H1 (cell line): ENCODE measurements at regions of chr12 and their contacts with region 1.

Region 1: GRCh38 chr12:60977966-60978365 is 1282.2 kb upstream of the USP15 start:
- DNase-seq: peak in 1 of 2 experiments; percentile 1
- H3K4me3 ChIP-seq: no peak overlapping the region
- H3K27ac ChIP-seq: no peak overlapping the region
- H3K4me1 ChIP-seq: peaks cover 0 to 4% (median 1%) of the 10 kb centered on the region in 4 experiments; a peak in 2 of 7 replicates
- H3K27me3 ChIP-seq: no peaks in the 10 kb centered on the region
- CTCF ChIP-seq: peak in 2 of 3 experiments; percentile 41 to 59; a peak in 2 of 4 replicates
- EP300 ChIP-seq: no peak
- POLR2A ChIP-seq: no peak
- RAD21 ChIP-seq: peak; percentile 57 to 67

Region 2: GRCh38 chr12:60752589-60752988 is 225.4 kb before region 1 on chr12:
- CTCF ChIA-PET with region 1: no interaction called
- POLR2A ChIA-PET with region 1: no interaction called
- DNase-seq: no peak
- H3K4me3 ChIP-seq: no peak overlapping the region
- H3K27ac ChIP-seq: no peak overlapping the region
- H3K4me1 ChIP-seq: no peaks in the 10 kb centered on the region
- H3K27me3 ChIP-seq: no peaks in the 10 kb centered on the region
- CTCF ChIP-seq: no peak
- EP300 ChIP-seq: no peak
- POLR2A ChIP-seq: no peak
- RAD21 ChIP-seq: no peak

Region 3: DNA sequence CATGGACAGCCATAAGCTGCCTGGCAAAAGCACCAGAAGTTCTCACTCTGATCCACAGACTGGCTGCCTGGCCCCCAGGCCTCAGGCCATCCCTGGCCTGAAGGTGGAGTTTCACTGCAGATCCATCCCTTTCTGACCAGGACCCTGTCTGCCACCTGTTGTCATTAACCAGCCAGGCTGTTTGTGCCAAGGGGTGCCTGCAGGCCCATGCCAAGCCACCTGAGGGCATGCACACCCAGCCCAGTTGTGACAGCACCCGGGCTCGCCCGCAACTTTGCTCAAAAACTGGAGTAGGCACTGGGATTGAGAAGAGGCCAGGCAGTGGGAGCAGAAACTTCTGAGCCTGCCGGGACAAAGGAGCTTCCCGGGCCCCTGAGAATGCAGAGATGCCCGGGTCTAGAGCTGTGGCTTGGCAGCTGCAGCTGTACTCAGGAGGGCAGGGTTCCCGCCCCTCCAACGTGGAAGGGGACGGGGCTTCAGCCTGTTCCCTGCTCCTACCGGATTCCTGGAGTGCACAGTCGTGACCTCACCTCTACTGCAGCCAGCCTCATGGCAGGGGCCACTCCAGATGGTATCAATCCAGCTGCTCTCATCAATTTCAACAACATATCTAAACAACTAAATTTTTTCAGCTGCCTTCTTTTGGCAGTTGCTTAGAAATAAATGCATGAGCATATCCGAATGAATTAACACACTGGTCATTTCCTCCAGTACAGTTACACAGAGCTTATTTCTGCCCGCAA is 104.8 kb before region 1 on chr12:
- CTCF ChIA-PET with region 1: no interaction called
- POLR2A ChIA-PET with region 1: no interaction called
- DNase-seq: peak in 1 of 2 experiments; percentile 35
- H3K4me3 ChIP-seq: no peak overlapping the region
- H3K27ac ChIP-seq: no peak overlapping the region
- H3K4me1 ChIP-seq: no peaks in the 10 kb centered on the region; a peak in 1 of 7 replicates
- H3K27me3 ChIP-seq: no peaks in the 10 kb centered on the region
- CTCF ChIP-seq: no peak
- EP300 ChIP-seq: no peak
- POLR2A ChIP-seq: no peak
- RAD21 ChIP-seq: peak in 1 of 2 experiments; percentile 29; a peak in 1 of 4 replicates

Region 4: GRCh38 chr12:60920841-60921495 is 57.0 kb before region 1 on chr12:
- CTCF ChIA-PET with region 1: no interaction called
- POLR2A ChIA-PET with region 1: no interaction called
- DNase-seq: no peak
- H3K4me3 ChIP-seq: no peak overlapping the region
- H3K27ac ChIP-seq: no peak overlapping the region
- H3K4me1 ChIP-seq: no peaks in the 10 kb centered on the region
- H3K27me3 ChIP-seq: no peaks in the 10 kb centered on the region
- CTCF ChIP-seq: no peak
- EP300 ChIP-seq: no peak
- POLR2A ChIP-seq: no peak
- RAD21 ChIP-seq: no peak

Region 5: DNA sequence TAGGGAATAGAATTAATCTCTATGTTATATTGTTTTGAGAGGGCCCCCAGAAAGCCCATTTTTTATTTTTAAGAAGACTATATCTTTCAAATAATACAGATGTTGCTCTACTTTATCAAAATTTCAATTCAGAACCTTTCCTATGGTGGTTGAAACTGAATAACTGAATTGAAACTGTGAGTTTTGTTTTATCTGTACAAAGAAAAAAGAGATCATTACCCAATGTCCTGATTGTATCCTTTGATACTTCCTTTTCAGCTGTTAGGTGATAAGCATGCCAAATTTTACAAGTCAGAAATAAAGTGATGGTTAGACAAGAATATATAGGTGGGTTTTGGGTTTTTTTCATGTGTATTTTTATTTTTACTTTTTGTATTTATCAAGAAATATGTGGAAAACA is 10.8 kb before region 1 on chr12:
- CTCF ChIA-PET with region 1: interaction called, 11 read pairs
- POLR2A ChIA-PET with region 1: no interaction called
- DNase-seq: no peak
- H3K4me3 ChIP-seq: no peak overlapping the region
- H3K27ac ChIP-seq: no peak overlapping the region
- H3K4me1 ChIP-seq: no peaks in the 10 kb centered on the region
- H3K27me3 ChIP-seq: no peaks in the 10 kb centered on the region
- CTCF ChIP-seq: no peak
- EP300 ChIP-seq: no peak
- POLR2A ChIP-seq: no peak
- RAD21 ChIP-seq: no peak

Region 6: DNA sequence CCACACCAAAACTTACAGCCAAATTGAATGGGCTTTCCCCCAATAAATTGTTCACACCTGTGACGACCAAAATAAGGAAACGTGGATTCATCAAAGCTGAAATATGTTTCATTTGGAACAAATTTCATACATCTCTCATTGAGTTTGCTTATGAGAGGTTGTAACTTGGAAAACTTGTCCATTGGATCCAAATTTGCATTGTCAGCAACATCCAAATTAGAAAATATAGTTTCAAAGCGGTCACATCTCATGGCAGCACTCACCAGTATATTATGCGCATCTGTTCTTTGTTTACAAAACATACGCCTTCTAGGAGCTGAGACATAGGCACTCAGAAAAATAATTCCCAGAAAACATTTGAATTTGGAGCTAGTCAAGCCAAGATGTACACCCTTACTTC is 254.1 kb after region 1 on chr12:
- CTCF ChIA-PET with region 1: no interaction called
- POLR2A ChIA-PET with region 1: no interaction called
- DNase-seq: no peak
- H3K4me3 ChIP-seq: no peak overlapping the region
- H3K27ac ChIP-seq: no peak overlapping the region
- H3K4me1 ChIP-seq: no peaks in the 10 kb centered on the region
- H3K27me3 ChIP-seq: no peaks in the 10 kb centered on the region
- CTCF ChIP-seq: no peak
- EP300 ChIP-seq: no peak
- POLR2A ChIP-seq: no peak
- RAD21 ChIP-seq: no peak